ENCODE measurements at regions of chr22 and their contacts with region 1.

Region 1: DNA sequence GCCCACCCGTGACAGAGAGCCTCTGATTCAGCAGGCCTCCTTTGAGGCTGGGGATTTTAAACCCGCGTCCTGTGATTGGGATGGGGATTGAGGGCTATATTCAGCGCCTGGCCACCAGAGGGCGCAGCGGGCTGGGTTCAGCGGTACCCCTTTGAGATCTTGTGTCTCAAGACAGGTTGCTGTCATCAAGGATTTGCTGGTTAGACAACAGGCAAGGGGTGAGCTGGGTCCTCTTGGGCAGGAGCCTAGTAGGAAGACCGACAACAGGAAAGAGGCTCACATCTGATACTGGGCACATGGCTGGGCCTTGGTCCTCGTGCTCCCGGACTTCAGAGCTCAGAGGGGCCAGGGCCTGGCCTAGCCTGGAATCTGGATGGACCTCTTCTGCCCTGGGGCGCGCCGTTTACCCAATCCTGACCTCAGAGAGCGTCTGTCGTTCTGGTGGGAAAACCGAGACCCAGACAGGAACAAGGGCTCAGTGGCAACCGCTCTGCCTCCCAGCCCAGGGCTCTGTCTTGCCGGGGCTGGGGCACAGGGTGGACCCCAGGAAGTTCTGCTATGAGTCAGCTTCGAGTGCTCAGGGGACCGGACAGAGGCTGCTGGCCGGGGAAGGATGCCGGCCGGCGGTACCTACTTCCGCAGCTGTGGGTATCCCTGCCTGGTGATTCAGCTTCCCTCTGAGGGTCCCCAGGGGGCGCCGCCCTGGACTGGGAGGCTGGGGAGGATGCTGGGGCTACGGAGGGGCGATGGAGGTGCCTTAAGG is 929 bp upstream of the SLC35E4 start:
- DNase-seq: peak; percentile 89 to 95
- ATAC-seq: peak; percentile 74 to 84 (median 78)
- H3K4me3 ChIP-seq: peak overlapping the region; percentile 87
- H3K27ac ChIP-seq: peak overlapping the region; percentile 85
- H3K4me1 ChIP-seq: peaks cover 17% of the 10 kb centered on the region
- H3K27me3 ChIP-seq: no peaks in the 10 kb centered on the region
- CTCF ChIP-seq: peak; percentile 97

Region 2: DNA sequence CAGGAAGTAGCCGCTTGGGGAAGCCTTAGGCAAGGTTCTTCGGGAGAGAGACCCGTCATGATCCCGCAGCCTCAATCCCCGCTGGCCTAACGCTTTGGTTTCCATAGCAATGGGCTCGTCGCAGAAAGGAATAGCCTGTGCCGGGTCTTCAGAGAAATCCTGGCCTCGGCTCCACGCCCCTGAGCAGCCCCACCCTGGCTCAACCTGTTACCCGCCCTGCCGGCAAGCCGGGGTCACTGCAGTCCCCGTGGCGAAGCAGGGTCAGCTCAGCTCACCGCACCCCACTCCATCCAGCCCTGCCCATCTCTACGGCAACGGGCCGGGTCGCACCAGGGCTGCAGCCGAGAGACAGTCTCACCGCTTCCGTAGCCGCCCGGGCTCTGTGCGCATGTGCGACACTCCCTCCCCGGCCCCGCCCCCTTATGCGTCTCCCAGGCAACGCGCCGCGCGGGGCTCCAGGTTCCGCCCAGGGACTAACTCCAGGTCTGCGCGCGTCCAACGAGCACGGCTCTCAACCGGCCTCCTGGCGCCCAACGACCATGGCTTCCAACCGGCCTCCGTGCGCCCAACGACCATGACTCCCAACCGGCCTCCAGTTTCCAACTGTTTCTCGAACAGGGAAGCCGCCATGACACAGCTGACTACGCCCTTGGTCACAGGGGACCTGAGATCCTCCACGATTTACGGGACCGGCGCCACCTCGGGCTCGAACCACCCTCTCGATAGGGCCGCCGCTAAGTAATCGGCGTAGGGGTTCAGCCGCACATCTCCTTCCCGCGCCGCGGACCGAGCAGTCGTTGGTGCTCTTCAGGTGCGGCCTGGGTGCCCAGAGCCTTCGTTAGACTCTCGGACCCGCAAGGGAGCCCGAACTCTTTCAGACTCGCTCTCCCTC is 33.1 kb after region 1 on chr22 and contains the start of gene DUSP18:
- intact Hi-C with region 1: loop called in 1 of 2 experiments (anchors 5 kb)
- DNase-seq: peak; percentile 93 to 96
- ATAC-seq: peak; percentile 98 to 100 (median 99)
- H3K4me3 ChIP-seq: peak within 1 kb of the TSS; percentile 86
- H3K27ac ChIP-seq: peak within 1 kb of the TSS; percentile 54
- H3K4me1 ChIP-seq: peaks cover 6% of the 10 kb centered on the region
- H3K27me3 ChIP-seq: no peaks in the 10 kb centered on the region
- CTCF ChIP-seq: peak; percentile 34
- total RNA-seq, gene DUSP18: 0.69 to 1.6 (median 1.3) TPM

Region 3: GRCh38 chr22:30694640-30695350 is 60.1 kb after region 1 on chr22 and contains the start of gene OSBP2:
- intact Hi-C with region 1: loop called (anchors 5 kb)
- DNase-seq: peak; percentile 44 to 64
- ATAC-seq: peak; percentile 72 to 81 (median 78)
- H3K4me3 ChIP-seq: peak within 1 kb of the TSS; percentile 74
- H3K27ac ChIP-seq: peak within 1 kb of the TSS; percentile 76
- H3K4me1 ChIP-seq: peaks cover 7% of the 10 kb centered on the region
- H3K27me3 ChIP-seq: peaks cover 0 to 7% (median 0%) of the 10 kb centered on the region in 3 donors
- CTCF ChIP-seq: peak; percentile 13
- total RNA-seq, gene OSBP2: 2.5 to 8.2 (median 3.3) TPM

Region 4: GRCh38 chr22:30754971-30755756 is 120.5 kb after region 1 on chr22:
- intact Hi-C with region 1: loop called (anchors 1 kb)
- DNase-seq: peak in 1 of 2 donors; percentile 58
- ATAC-seq: peak; percentile 86 to 97 (median 93)
- H3K4me3 ChIP-seq: no peak overlapping the region
- H3K27ac ChIP-seq: no peak overlapping the region
- H3K4me1 ChIP-seq: no peaks in the 10 kb centered on the region
- H3K27me3 ChIP-seq: no peaks in the 10 kb centered on the region
- CTCF ChIP-seq: peak; percentile 71

Region 5: DNA sequence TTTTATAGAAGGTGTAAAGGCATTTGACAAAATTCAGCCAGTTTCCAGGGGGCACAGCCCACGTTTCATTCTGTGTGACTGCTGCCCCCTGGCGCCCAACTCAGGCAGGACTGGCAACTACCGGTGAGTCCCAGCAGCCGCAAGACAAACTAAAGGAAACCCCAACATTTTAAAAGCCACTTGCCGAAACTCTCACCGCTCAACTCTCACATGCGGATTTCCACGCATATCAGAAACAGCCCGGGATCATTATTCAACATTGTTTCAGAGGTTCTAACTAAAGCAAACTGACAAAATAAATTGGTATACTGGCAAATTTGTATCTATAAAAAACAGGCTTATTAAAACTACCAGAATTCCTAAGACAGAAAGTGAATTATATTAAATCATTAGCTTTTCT is 285.8 kb after region 1 on chr22:
- intact Hi-C with region 1: loop called (anchors 5 kb)
- DNase-seq: peak; percentile 83 to 87
- ATAC-seq: peak; percentile 67 to 82 (median 68)
- H3K4me3 ChIP-seq: peak overlapping the region; percentile 68
- H3K27ac ChIP-seq: no peak overlapping the region
- H3K4me1 ChIP-seq: peaks cover 4% of the 10 kb centered on the region
- H3K27me3 ChIP-seq: no peaks in the 10 kb centered on the region
- CTCF ChIP-seq: peak; percentile 94

Measured in psoas muscle (tissue), 8 donors.